Activated T-helper 2 cell treated with anti-CD3 and anti-CD28 coated beads, Interferon-gamma antibody, Interleukin-2, Interleukin-4, amounts not matched to agents 10 μg/mL and 5 μg/mL and 100 μg/mL, durations not matched to agents 14 hours and 24 hours and 36 hours (primary cell): ENCODE measurements at regions of chr2 and their contacts with region 1.

Region 1: DNA sequence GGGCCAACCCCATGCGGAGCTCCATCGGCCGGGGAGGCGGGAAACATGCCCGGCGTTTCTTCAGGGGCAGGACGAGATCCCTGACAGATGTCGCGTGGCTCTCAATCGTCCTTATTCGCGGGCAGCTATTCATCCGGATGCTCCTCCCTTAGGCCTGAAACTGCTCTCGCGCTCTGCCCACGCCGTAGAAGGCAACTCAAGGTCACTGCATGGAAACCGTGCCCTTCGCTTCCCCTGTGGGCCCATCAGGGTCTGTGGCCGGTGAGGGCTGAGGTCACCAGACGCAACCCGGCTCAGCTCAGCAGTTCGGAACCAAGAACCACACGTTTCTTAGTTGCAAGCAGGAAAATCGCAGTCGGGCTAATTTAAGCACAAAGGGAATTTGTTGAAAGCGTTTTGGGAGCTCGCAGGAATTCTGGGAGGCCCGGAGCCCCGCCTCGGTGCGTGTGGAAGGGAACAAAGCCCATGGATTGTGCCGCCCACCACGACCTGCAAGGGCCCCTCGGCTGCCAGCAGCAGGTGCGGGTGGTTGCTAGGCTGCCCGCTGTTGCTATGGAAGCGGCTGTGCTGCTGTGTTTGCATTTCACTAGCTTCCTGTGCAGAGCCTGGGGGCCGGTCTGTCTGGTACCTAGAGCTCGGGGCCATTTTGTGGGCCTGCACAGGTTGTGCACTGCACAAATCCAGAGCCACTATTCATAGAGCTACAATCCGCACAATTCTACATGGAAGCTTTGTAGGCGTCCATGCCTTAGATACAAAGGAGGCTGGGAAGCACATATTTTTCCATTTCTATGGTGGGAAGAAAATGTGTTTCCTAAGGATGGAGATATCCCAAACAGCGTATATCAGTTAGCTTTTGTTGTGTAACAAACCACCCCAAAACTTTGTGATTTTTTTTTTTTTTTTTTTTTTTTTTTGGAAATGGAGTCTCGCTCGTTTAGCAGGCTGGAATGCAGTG is 6.0 kb upstream of the ALLC start:
- DNase-seq: peak; percentile 66
- H3K4me3 Mint-ChIP-seq: peak overlapping the region; percentile 80
- H3K27ac Mint-ChIP-seq: peak overlapping the region; percentile 94
- H3K4me1 Mint-ChIP-seq: peaks cover 14% of the 10 kb centered on the region
- H3K27me3 Mint-ChIP-seq: no peaks in the 10 kb centered on the region

Region 2: DNA sequence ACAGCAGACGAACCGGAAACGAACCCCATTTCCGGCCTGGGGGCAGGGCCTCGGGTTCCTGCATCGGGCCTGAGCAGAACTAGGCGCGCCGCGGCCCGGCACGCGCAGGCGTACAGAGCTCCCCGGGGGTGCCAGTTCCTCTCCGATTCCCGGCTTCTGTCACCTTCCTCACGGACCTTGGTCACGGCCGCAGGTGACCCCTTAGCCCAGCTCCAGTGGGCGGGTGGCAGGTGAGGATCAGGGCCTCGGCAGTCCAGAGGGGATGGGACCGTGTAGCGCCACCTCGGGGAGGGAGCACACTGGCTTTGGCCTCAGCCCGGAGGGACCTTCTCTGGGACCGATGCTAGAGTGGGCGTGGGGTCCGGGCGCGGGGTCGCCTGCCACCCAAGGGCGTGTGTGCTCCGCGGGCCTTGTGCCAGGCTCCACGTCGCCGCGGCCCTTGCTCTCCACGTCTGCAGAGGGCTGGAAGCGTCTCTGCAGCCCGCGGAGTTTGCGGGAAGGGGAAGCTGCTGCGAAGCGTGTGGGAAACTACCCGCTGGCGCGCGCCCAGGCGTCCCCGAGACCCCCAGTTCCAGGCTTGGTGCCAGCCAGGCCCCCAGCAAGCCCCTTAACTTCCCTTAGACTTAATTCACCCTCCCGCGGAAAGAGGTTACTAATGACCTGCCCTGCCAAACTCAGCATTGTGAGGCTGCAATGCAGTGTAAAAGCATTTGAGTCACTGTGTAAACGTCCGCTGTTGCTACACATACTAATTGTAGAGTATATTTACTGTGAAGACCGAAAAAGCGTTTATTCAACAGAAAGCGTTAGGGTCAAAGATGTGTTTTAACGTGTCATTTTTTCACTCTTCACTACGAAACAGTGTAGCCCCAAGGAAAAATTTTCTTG is 272.1 kb before region 1 on chr2 and contains the start of gene TRAPPC12:
- intact Hi-C with region 1: loop called (anchors 1 kb)
- DNase-seq: peak; percentile 91
- H3K4me3 Mint-ChIP-seq: peak within 1 kb of the TSS; percentile 97
- H3K27ac Mint-ChIP-seq: peak within 1 kb of the TSS; percentile 97
- H3K4me1 Mint-ChIP-seq: peaks cover 33% of the 10 kb centered on the region
- H3K27me3 Mint-ChIP-seq: no peaks in the 10 kb centered on the region
- total RNA-seq, gene TRAPPC12: 84.6 and 87.1 TPM in 2 replicates

Region 3: GRCh38 chr2:3423492-3424175 is 228.3 kb before region 1 on chr2:
- intact Hi-C with region 1: loop called (anchors 1 kb)
- DNase-seq: peak; percentile 55
- H3K4me3 Mint-ChIP-seq: no peak overlapping the region
- H3K27ac Mint-ChIP-seq: peak overlapping the region; percentile 10
- H3K4me1 Mint-ChIP-seq: peaks cover 3% of the 10 kb centered on the region
- H3K27me3 Mint-ChIP-seq: no peaks in the 10 kb centered on the region

Region 4: GRCh38 chr2:3461801-3462492 is 190.0 kb before region 1 on chr2:
- intact Hi-C with region 1: loop called (anchors 2 kb)
- DNase-seq: no peak
- H3K4me3 Mint-ChIP-seq: no peak overlapping the region
- H3K27ac Mint-ChIP-seq: no peak overlapping the region
- H3K4me1 Mint-ChIP-seq: peaks cover 5% of the 10 kb centered on the region
- H3K27me3 Mint-ChIP-seq: no peaks in the 10 kb centered on the region

Region 5: GRCh38 chr2:3518496-3519254 is 133.3 kb before region 1 on chr2:
- intact Hi-C with region 1: loop called (anchors 1 kb)
- DNase-seq: peak; percentile 98
- H3K4me3 Mint-ChIP-seq: peak overlapping the region; percentile 91
- H3K27ac Mint-ChIP-seq: peak overlapping the region; percentile 78
- H3K4me1 Mint-ChIP-seq: peaks cover 31% of the 10 kb centered on the region
- H3K27me3 Mint-ChIP-seq: no peaks in the 10 kb centered on the region

Region 6: GRCh38 chr2:3575534-3576262 is 76.3 kb before region 1 on chr2:
- intact Hi-C with region 1: loop called (anchors 1 kb)
- DNase-seq: peak; percentile 27
- H3K4me3 Mint-ChIP-seq: peak overlapping the region; percentile 93
- H3K27ac Mint-ChIP-seq: peak overlapping the region; percentile 90
- H3K4me1 Mint-ChIP-seq: peaks cover 34% of the 10 kb centered on the region
- H3K27me3 Mint-ChIP-seq: no peaks in the 10 kb centered on the region

Region 7: GRCh38 chr2:3864943-3865865 is 213.2 kb after region 1 on chr2:
- intact Hi-C with region 1: no loop called
- DNase-seq: no peak
- H3K4me3 Mint-ChIP-seq: no peak overlapping the region
- H3K27ac Mint-ChIP-seq: no peak overlapping the region
- H3K4me1 Mint-ChIP-seq: no peaks in the 10 kb centered on the region
- H3K27me3 Mint-ChIP-seq: no peaks in the 10 kb centered on the region